OCI-LY7 (cell line): ENCODE measurements at regions of chrX and their contacts with region 1.

Region 1: GRCh38 chrX:110317820-110318658 is at the start of gene AMMECR1:
- DNase-seq: peak; percentile 88
- H3K4me3 ChIP-seq: peak within 1 kb of the TSS; percentile 91
- H3K27ac ChIP-seq: peak within 1 kb of the TSS; percentile 76
- H3K4me1 ChIP-seq: peaks cover 69% of the 10 kb centered on the region
- CTCF ChIP-seq: no peak
- total RNA-seq, gene AMMECR1: 12.5 and 19.1 TPM in 2 replicates

Region 2: DNA sequence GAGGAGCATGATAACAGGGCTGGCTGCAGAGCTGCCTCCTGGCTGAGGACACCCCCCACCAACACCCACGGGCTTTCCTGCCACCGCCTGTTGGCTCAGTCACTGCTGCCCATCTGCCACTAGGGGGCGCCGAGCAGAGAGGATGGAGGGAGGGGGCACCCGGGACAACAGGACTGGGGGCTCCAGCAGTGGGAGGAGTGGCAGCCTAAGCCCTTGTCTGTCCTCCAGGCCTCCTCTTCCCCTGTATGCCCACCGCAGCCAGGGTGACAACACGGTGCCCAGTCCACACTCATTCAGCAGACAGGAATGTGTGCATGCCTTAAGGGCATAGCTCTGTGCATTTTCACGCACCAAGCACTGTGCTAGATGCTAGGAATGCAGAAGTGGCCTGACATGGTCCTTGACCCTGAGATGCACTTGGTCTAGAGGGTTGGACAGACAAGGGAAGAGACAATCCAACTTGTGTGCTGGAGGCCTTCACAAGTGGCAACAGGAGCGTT is 150.0 kb before region 1 on chrX:
- CTCF ChIA-PET with region 1: no interaction called
- POLR2A ChIA-PET with region 1: no interaction called
- intact Hi-C with region 1: loop called (anchors 5 kb)
- DNase-seq: peak; percentile 39
- H3K4me3 ChIP-seq: no peak overlapping the region
- H3K27ac ChIP-seq: no peak overlapping the region
- H3K4me1 ChIP-seq: no peaks in the 10 kb centered on the region
- CTCF ChIP-seq: peak; percentile 74

Region 3: GRCh38 chrX:110245011-110245410 is 73.0 kb before region 1 on chrX:
- CTCF ChIA-PET with region 1: no interaction called
- POLR2A ChIA-PET with region 1: no interaction called
- intact Hi-C with region 1: no loop called
- DNase-seq: no peak
- H3K4me3 ChIP-seq: no peak overlapping the region
- H3K27ac ChIP-seq: no peak overlapping the region
- H3K4me1 ChIP-seq: no peaks in the 10 kb centered on the region
- CTCF ChIP-seq: no peak

Region 4: GRCh38 chrX:110276778-110277177 is 41.3 kb before region 1 on chrX:
- CTCF ChIA-PET with region 1: no interaction called
- POLR2A ChIA-PET with region 1: no interaction called
- intact Hi-C with region 1: no loop called
- DNase-seq: peak; percentile 4
- H3K4me3 ChIP-seq: no peak overlapping the region
- H3K27ac ChIP-seq: no peak overlapping the region
- H3K4me1 ChIP-seq: no peaks in the 10 kb centered on the region
- CTCF ChIP-seq: no peak

Region 5: GRCh38 chrX:110341189-110342035 is 23.4 kb after region 1 on chrX:
- CTCF ChIA-PET with region 1: interaction called, 3 read pairs
- POLR2A ChIA-PET with region 1: interaction called, 8 read pairs
- intact Hi-C with region 1: loop called (anchors 1 kb)
- DNase-seq: peak; percentile 24
- H3K4me3 ChIP-seq: no peak overlapping the region
- H3K27ac ChIP-seq: no peak overlapping the region
- H3K4me1 ChIP-seq: peaks cover 8% of the 10 kb centered on the region
- CTCF ChIP-seq: no peak

Region 6: GRCh38 chrX:110401140-110401539 is 83.1 kb after region 1 on chrX:
- CTCF ChIA-PET with region 1: interaction called, 3 read pairs
- POLR2A ChIA-PET with region 1: no interaction called
- intact Hi-C with region 1: loop called (anchors 2 kb)
- DNase-seq: peak; percentile 8
- H3K4me3 ChIP-seq: no peak overlapping the region
- H3K27ac ChIP-seq: no peak overlapping the region
- H3K4me1 ChIP-seq: no peaks in the 10 kb centered on the region
- CTCF ChIP-seq: peak; percentile 29; the same call in 1 of the 2 replicates

Region 7: GRCh38 chrX:110836982-110837381 is 518.9 kb after region 1 on chrX:
- CTCF ChIA-PET with region 1: no interaction called
- POLR2A ChIA-PET with region 1: no interaction called
- intact Hi-C with region 1: no loop called
- DNase-seq: no peak
- H3K4me3 ChIP-seq: no peak overlapping the region
- H3K27ac ChIP-seq: no peak overlapping the region
- H3K4me1 ChIP-seq: no peaks in the 10 kb centered on the region
- CTCF ChIP-seq: peak; percentile 39; the same call in 1 of the 2 replicates